Dendritic cell treated with granulocyte-macrophage colony-stimulating factor and Interleukin-4, amounts not matched to agents 40 ng/mL and 50 ng/mL, for 4 days (primary cell): ENCODE measurements at regions of chr2 and their contacts with region 1.

Region 1: GRCh38 chr2:217798743-217799562 is 203.8 kb downstream of the TNS1 start:
- H3K4me3 Mint-ChIP-seq: no peak overlapping the region
- H3K27ac Mint-ChIP-seq: peak overlapping the region; percentile 81
- H3K4me1 Mint-ChIP-seq: peaks cover 41% of the 10 kb centered on the region
- H3K27me3 Mint-ChIP-seq: peaks cover 5% of the 10 kb centered on the region

Region 2: DNA sequence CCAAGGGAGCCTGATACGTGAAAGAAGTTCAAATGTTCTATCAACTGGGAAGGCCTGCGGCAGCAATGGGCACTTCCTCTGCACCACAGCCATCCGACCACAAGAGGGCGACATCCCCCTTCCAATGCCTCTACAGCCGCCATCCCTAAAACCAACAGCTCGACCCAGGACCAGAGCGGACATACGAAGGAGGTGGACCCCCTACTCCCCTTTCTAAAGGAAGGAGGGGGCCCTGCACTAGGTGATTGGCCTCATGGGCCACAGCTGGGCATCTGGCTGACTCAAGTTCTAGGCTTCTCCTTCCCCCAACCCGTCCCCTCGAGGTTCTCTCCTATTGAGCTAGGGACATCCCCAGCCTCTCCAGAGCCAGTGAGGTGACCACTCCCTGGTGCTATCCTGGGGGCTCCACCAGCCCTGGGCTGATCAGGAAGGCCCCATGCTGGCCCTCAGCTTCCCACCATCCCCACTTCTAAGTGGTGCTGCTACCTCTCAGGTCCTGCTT is 13.4 kb before region 1 on chr2:
- intact Hi-C with region 1: no loop called
- H3K4me3 Mint-ChIP-seq: no peak overlapping the region
- H3K27ac Mint-ChIP-seq: no peak overlapping the region
- H3K4me1 Mint-ChIP-seq: peaks cover 19% of the 10 kb centered on the region
- H3K27me3 Mint-ChIP-seq: peaks cover 28% of the 10 kb centered on the region

Region 3: DNA sequence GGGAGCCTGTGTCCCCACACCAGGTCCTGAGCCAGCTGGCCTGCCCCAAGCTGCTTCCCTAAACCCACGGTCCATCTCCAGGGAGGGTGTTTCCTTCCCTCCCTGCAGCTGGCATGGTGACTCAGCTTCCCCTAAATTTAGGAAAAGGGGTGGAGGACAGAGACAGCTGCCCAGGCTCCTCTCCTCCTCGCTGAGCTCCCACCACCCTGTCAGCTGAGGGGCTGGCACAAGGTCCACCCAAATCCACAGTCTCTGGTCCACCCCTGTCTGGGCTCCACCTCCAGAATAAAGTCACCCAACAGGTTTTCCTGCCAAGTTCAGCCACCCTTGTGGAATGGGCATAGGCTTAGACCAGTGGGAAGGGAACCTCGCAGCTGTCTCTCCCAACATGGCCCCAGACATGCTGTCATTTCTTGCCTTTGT is 47.4 kb after region 1 on chr2:
- intact Hi-C with region 1: loop called (anchors 10 kb)
- H3K4me3 Mint-ChIP-seq: no peak overlapping the region
- H3K27ac Mint-ChIP-seq: peak overlapping the region; percentile 59
- H3K4me1 Mint-ChIP-seq: peaks cover 46% of the 10 kb centered on the region
- H3K27me3 Mint-ChIP-seq: peaks cover 20% of the 10 kb centered on the region

Region 4: GRCh38 chr2:217864963-217865772 is 66.2 kb after region 1 on chr2:
- intact Hi-C with region 1: no loop called
- H3K4me3 Mint-ChIP-seq: no peak overlapping the region
- H3K27ac Mint-ChIP-seq: no peak overlapping the region
- H3K4me1 Mint-ChIP-seq: peaks cover 28% of the 10 kb centered on the region
- H3K27me3 Mint-ChIP-seq: peaks cover 6% of the 10 kb centered on the region